ENCODE measurements at regions of chr2 and their contacts with region 1.

Region 1: DNA sequence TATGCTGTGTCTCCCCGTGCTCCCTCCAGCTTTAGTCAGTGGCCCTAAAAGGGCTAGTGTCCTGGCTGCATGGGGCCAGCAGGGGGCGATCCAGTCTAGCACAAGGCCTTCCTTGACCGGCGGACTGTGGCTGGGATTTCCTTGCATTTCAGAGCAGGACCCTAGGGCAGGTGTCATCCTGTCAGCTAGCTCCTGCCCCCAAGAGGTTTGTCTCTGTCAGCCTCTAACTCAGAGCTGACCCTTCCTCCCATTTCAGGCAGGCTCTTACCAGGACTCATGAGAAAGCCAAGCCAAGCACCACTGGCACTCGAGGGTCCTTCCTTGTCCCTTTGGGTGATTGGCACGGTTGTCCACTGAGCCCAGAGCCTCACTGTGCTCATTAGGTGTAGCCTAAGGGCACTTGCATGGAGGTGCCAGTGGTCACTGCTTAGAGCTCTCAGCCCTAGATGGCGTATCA is 140.3 kb downstream of the RPIA start:
- DNase-seq: peak; percentile 98
- H3K4me3 ChIP-seq: peak overlapping the region; percentile 66
- H3K27ac ChIP-seq: peak overlapping the region; percentile 100
- H3K4me1 ChIP-seq: peaks cover 99% of the 10 kb centered on the region
- CTCF ChIP-seq: peak; percentile 98

Region 2: GRCh38 chr2:88739985-88740600 is 91.7 kb before region 1 on chr2:
- CTCF ChIA-PET with region 1: interaction called, 6 read pairs
- POLR2A ChIA-PET with region 1: interaction called, 517 read pairs
- intact Hi-C with region 1: loop called (anchors 1 kb)
- DNase-seq: peak; percentile 88
- H3K4me3 ChIP-seq: peak overlapping the region; percentile 18
- H3K27ac ChIP-seq: peak overlapping the region; percentile 69
- H3K4me1 ChIP-seq: peaks cover 22% of the 10 kb centered on the region
- CTCF ChIP-seq: peak; percentile 97

Region 3: GRCh38 chr2:88765154-88765900 is 66.5 kb before region 1 on chr2:
- CTCF ChIA-PET with region 1: no interaction called
- POLR2A ChIA-PET with region 1: interaction called, 5 read pairs
- intact Hi-C with region 1: loop called (anchors 2 kb)
- DNase-seq: peak; percentile 94
- H3K4me3 ChIP-seq: peak overlapping the region; percentile 78
- H3K27ac ChIP-seq: peak overlapping the region; percentile 86
- H3K4me1 ChIP-seq: peaks cover 33% of the 10 kb centered on the region
- CTCF ChIP-seq: 0 out of 2 replicates have a peak, but pooled peaks have one; percentile 15

Region 4: DNA sequence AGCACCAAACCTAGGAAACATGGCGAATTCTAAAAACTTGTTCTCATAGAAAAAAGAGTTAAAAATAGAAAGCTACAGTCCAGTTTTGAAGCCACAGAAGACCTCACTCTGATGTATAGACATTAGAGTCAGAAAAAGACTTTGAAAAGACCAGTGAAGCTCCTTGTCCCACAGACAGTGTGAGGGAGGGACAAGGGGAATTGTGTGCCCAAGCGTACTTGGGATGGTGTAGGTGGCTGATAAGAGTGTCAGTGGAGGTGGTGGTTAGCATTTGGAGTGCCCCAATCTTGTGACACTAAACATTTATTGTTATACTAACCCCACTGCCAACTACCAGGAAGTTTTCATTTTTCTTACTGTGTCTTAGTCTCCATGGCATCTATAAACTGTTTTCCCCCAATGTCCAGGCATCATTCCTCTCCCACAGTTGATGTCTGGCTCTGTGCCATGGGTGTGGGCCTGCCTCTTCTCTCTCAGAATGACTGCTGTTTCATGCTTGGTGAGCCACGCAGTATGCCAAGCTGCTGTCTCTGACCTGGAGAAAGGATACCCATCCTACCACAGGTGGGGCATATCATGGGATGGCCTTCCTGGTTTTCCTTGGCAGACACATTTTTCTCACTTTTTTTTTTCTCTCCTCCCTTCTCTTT is 21.1 kb after region 1 on chr2:
- CTCF ChIA-PET with region 1: interaction called, 17 read pairs
- POLR2A ChIA-PET with region 1: interaction called, 2,147 read pairs
- intact Hi-C with region 1: loop called (anchors 1 kb)
- DNase-seq: peak; percentile 29
- H3K4me3 ChIP-seq: peak overlapping the region; percentile 8
- H3K27ac ChIP-seq: peak overlapping the region; percentile 100
- H3K4me1 ChIP-seq: peaks cover 100% of the 10 kb centered on the region
- CTCF ChIP-seq: no peak

Measured in OCI-LY7 (cell line).